Aorta (tissue), 5 donors: ENCODE measurements at regions of chr15 and their contacts with region 1.

Region 1: DNA sequence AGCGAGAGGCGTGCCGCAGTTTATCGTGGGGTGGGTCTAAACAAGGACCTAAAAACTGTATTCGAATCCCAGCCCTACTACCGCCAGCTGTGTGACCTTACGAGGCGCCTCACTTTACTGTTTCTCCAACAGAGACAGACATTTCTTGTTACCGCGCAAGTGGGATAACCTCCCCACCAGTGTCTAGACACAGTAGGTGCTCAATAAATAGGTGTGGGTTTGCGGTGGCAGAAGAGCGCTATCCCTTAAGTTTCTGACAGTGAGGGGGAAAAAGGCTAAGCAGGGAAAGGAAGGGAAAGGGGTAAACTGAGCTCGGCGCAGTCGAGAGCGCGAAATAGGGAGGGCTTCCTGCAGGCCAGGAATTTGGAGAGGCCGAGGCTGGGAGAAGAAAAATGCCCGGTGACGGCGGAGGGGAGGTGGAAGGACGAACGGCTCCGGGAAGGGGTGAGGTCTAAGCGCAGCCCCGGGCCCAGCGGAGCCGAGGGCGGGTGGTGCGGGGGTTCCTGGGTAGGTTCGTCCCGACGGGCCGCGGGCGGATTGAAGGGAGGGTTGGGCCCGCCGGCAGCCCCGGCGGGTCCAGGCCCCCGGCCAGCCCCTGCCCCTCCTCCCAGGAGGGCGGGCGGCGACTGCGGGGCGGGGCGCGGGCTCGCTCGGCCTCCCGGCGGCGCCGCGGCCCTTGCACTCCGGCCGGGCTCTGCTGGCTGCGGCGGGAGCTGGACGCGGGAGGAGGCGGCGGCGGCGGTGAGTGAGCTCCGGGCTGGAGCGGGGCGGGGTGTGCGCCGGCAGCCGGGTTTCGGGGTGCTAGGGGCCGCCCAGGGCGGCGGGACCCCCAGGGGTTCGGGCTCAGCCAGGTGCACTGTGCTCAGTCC is at the start of gene CGNL1:
- DNase-seq: peak; percentile 62 to 85
- ATAC-seq: peak; percentile 86
- H3K4me3 ChIP-seq: peak within 1 kb of the TSS; percentile 81 to 94
- H3K27ac ChIP-seq: peak within 1 kb of the TSS in 1 of 2 donors; percentile 14
- H3K4me1 ChIP-seq: peaks cover 0 to 2% of the 10 kb centered on the region in 2 donors
- H3K27me3 ChIP-seq: no peaks in the 10 kb centered on the region
- total RNA-seq, gene CGNL1: 19.4 to 46.3 TPM

Region 2: DNA sequence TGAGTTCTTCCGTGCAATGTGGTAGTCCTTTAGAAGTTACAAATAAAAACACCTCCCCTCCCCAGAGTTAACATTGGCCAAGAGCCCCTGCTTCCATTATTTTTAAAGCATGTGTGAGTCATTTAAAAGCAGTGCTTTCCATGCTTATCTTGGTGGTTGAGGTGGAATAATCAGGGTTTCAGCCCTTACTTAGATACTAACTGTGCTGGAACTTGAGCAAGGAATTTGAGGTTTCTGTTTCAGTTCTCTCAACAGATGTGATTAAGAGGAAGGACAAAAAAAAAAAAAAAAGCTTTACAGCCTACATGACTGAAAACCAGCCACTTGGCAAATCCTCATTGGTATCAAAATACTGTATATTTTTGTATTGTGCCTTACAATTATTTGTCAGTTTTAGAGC is 64.7 kb after region 1 on chr15:
- intact Hi-C with region 1: loop called in 1 of 2 experiments (anchors 5 kb)
- DNase-seq: no peak
- ATAC-seq: no peak
- H3K4me3 ChIP-seq: no peak overlapping the region
- H3K27ac ChIP-seq: no peak overlapping the region
- H3K4me1 ChIP-seq: no peaks in the 10 kb centered on the region
- H3K27me3 ChIP-seq: no peaks in the 10 kb centered on the region

Region 3: DNA sequence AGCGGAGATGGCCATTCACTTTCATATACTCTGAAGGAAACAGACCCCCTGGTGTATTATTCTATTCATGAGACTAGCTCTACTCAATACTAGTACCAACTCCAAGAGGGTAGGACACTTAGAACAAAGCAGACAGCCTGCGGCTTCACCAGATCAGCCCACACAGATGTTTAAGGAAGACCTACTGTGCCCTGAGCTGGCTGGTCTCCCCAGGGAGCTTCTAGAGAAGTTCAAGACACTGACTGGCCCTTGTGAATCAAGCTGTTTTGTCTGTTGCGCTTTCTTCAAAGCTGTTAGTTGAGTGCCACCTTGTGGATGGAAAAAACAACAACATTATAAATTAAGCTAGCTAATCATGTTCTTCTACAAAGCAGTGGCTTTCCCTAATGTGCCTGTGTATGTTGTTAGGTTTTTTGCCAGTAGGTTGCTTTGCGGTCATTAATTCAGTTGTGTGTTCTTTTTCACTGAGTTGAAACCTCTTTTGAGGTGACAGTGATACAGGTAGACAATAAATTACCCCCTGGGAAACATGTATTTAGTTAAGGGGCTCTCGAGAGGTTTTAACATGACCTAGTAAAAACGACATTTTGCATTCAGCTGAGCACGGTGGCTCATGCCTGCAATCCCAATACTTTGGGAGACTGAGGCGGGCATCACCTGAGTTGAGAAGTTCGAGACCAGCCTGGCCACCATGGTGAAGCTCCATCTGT is 151.5 kb after region 1 on chr15:
- intact Hi-C with region 1: loop called in 1 of 2 experiments (anchors 10 kb)
- DNase-seq: peak in 1 of 2 donors; percentile 48
- ATAC-seq: peak; percentile 70
- H3K4me3 ChIP-seq: no peak overlapping the region
- H3K27ac ChIP-seq: no peak overlapping the region
- H3K4me1 ChIP-seq: no peaks in the 10 kb centered on the region
- H3K27me3 ChIP-seq: no peaks in the 10 kb centered on the region